ENCODE measurements at regions of chr7 and their contacts with region 1.

Region 1: GRCh38 chr7:46953008-46953407 is 628.9 kb downstream of the TNS3 start:
- DNase-seq: no peak
- H3K4me3 ChIP-seq: no peak overlapping the region
- H3K27ac ChIP-seq: no peak overlapping the region
- H3K4me1 ChIP-seq: no peaks in the 10 kb centered on the region
- H3K27me3 ChIP-seq: no peaks in the 10 kb centered on the region
- CTCF ChIP-seq: no peak
- POLR2A ChIP-seq: no peak

Region 2: DNA sequence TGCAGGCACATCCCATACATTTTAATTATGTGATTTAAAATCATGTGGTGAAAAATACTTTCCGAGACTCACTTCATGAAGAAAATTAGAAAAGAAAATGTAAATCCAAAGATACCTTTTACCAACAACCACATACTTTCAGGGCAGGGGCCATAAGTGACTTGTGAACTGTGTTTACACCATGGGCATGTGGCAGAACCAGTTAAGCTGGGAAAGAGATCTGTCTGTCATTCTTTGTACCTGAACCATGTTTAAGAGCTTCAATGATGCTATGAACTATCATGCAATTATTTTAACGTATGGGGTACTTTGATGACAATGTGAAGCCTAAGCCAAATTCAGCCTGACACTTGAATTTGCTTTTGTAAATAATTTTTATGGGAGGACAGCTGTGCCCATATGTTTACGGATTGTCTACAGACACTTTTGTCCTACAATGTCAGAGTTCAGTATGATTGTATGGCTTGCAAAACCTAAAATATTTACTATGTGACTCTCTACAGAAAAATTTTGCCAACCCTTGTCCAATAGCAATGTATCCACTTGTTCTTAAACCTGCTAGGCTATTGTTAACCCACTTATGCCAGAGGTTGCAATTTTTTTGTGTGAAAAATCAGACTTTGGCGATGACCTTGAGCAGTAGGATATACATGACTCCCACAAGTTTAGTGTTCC is 25.7 kb before region 1 on chr7:
- CTCF ChIA-PET with region 1: no interaction called
- POLR2A ChIA-PET with region 1: no interaction called
- dilution Hi-C with region 1: no loop called
- intact Hi-C with region 1: loop called (anchors 2 kb)
- DNase-seq: no peak
- H3K4me3 ChIP-seq: no peak overlapping the region
- H3K27ac ChIP-seq: no peak overlapping the region
- H3K4me1 ChIP-seq: no peaks in the 10 kb centered on the region
- H3K27me3 ChIP-seq: no peaks in the 10 kb centered on the region
- CTCF ChIP-seq: no peak
- POLR2A ChIP-seq: no peak

Region 3: DNA sequence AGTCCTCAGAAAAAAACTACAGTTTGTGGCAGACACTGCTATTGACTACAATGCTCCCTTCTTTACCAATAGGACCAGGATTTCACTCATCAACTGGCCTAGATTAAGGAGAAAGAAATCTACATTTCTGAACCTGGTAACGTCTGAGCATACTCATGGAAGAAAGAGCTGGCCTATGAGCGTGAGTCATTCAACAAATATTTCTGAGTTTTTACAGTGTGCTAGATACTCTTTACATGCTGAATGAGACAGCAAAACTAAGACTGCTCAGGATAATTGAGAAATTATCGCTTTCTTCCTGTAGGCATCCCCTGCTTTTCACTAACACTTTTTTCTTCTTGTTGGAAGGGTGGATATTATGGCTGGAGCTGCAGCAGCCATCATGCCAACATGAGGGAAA is 19.2 kb after region 1 on chr7:
- CTCF ChIA-PET with region 1: no interaction called
- POLR2A ChIA-PET with region 1: no interaction called
- dilution Hi-C with region 1: no loop called
- intact Hi-C with region 1: no loop called
- DNase-seq: peak; percentile 12
- H3K4me3 ChIP-seq: no peak overlapping the region
- H3K27ac ChIP-seq: no peak overlapping the region
- H3K4me1 ChIP-seq: peaks cover 4% of the 10 kb centered on the region
- H3K27me3 ChIP-seq: no peaks in the 10 kb centered on the region
- CTCF ChIP-seq: no peak
- POLR2A ChIP-seq: no peak